ENCODE measurements at regions of chr6 and their contacts with region 1.

Region 1: DNA sequence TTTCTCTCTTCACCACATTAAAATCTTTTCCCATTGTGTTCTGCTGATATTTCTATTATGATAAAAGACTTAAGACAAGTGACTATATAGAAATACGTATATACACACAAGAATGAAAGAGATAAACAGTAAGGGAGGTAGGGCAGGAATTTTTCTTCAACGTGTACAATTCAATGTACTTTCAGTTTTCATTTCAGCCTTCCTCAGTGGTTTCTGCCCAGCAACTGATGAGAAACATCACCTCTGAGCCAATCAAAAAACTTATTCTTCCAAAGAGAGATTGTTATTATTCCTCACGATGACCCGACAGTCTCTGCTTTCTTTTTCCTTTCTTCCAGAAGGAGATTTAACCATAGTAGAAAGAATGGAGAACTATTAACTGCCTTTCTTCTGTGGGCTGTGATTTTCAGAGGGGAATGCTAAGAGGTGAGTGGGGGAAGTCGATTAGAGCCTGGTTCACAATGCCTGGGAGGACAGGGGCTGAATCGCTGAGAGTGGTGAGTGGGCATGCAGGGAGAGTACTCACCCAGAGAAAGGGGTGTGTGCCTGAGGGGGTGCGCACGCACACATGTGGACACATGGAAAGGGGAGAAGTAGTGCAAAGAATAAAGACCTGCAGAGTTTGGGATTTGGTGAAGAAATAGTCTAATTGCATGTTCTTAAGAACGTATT is at the start of gene BTN3A1:
- DNase-seq: peak; percentile 22 to 90 (median 65)
- ATAC-seq: peak; percentile 88
- H3K4me3 ChIP-seq: peak within 1 kb of the TSS; percentile 82 to 91
- H3K4me3 Mint-ChIP-seq: peak within 1 kb of the TSS; percentile 92
- H3K27ac ChIP-seq: peak within 1 kb of the TSS; percentile 92 to 97
- H3K27ac Mint-ChIP-seq: peak within 1 kb of the TSS; percentile 99
- H3K4me1 ChIP-seq: peaks cover 42% of the 10 kb centered on the region
- H3K4me1 Mint-ChIP-seq: peaks cover 50% of the 10 kb centered on the region
- H3K27me3 ChIP-seq: no peaks in the 10 kb centered on the region
- H3K27me3 Mint-ChIP-seq: no peaks in the 10 kb centered on the region
- CTCF ChIP-seq: no peak
- total RNA-seq, gene BTN3A1: 97.0 to 104 TPM

Region 2: GRCh38 chr6:24554485-24554884 is 1847.6 kb before region 1 on chr6:
- CTCF ChIA-PET with region 1: no interaction called
- POLR2A ChIA-PET with region 1: no interaction called
- intact Hi-C with region 1: no loop called
- DNase-seq: no peak
- ATAC-seq: no peak
- H3K4me3 ChIP-seq: no peak overlapping the region
- H3K4me3 Mint-ChIP-seq: no peak overlapping the region
- H3K27ac ChIP-seq: no peak overlapping the region
- H3K27ac Mint-ChIP-seq: no peak overlapping the region
- H3K4me1 ChIP-seq: no peaks in the 10 kb centered on the region
- H3K4me1 Mint-ChIP-seq: no peaks in the 10 kb centered on the region
- H3K27me3 ChIP-seq: no peaks in the 10 kb centered on the region
- H3K27me3 Mint-ChIP-seq: no peaks in the 10 kb centered on the region
- CTCF ChIP-seq: no peak

Region 3: GRCh38 chr6:25574312-25574711 is 827.8 kb before region 1 on chr6:
- CTCF ChIA-PET with region 1: no interaction called
- POLR2A ChIA-PET with region 1: no interaction called
- intact Hi-C with region 1: no loop called
- DNase-seq: no peak
- ATAC-seq: no peak
- H3K4me3 ChIP-seq: no peak overlapping the region
- H3K4me3 Mint-ChIP-seq: no peak overlapping the region
- H3K27ac ChIP-seq: no peak overlapping the region
- H3K27ac Mint-ChIP-seq: no peak overlapping the region
- H3K4me1 ChIP-seq: no peaks in the 10 kb centered on the region
- H3K4me1 Mint-ChIP-seq: no peaks in the 10 kb centered on the region
- H3K27me3 ChIP-seq: peaks cover 0 to 2% of the 10 kb centered on the region in 2 experiments
- H3K27me3 Mint-ChIP-seq: no peaks in the 10 kb centered on the region
- CTCF ChIP-seq: no peak

Region 4: DNA sequence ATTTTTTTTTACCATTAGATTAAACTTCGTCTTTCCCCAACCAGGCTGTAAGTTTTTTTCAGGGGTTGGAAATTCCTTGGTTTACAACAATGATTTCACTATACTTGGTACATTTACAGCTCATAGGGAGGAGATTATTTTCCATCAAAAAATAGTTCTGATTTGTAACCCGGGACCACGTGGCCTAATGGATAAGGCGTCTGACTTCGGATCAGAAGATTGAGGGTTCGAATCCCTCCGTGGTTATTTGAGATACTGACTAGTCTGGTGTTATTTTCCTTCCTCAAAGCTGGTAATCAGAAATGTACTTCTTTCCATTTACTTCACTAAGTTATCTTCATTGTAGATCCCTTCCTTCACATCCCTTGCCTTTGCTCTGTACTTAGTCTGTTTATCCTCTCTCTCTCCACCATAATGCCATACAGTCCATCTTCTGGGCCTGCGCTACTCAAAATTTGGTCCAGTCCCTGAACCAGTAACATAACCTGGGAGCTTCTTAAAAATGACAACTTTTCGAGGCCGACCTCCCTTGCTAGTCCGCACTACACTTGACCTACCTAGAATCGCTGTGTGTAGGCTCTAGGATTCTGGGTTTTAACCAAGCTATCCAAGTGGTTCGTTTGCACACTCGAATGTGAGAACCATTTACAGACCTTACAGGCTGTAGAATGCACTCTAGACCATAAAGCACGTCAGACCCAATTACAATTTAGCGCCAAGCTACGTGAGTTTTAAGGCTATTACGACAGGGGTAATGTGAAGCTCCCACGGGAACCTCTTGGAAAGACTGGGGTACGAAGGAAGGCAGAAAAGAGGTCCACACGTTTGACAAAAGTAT is 79.3 kb before region 1 on chr6:
- CTCF ChIA-PET with region 1: no interaction called
- POLR2A ChIA-PET with region 1: no interaction called
- intact Hi-C with region 1: no loop called
- DNase-seq: peak in 8 of 9 experiments; percentile 32 to 86 (median 58)
- ATAC-seq: peak; percentile 65
- H3K4me3 ChIP-seq: peak overlapping the region; percentile 55 to 64
- H3K4me3 Mint-ChIP-seq: peak overlapping the region; percentile 88
- H3K27ac ChIP-seq: no peak overlapping the region
- H3K27ac Mint-ChIP-seq: peak overlapping the region; percentile 90
- H3K4me1 ChIP-seq: peaks cover 5% of the 10 kb centered on the region
- H3K4me1 Mint-ChIP-seq: peaks cover 24% of the 10 kb centered on the region
- H3K27me3 ChIP-seq: peaks cover 0 to 2% of the 10 kb centered on the region in 2 experiments
- H3K27me3 Mint-ChIP-seq: peaks cover 15% of the 10 kb centered on the region
- CTCF ChIP-seq: no peak

Region 5: GRCh38 chr6:26363882-26364701 is 38.0 kb before region 1 on chr6:
- CTCF ChIA-PET with region 1: no interaction called
- POLR2A ChIA-PET with region 1: no interaction called
- intact Hi-C with region 1: loop called (anchors 2 kb)
- DNase-seq: peak in 6 of 9 experiments; percentile 9 to 69 (median 34)
- ATAC-seq: no peak
- H3K4me3 ChIP-seq: peak overlapping the region; percentile 90 to 92
- H3K4me3 Mint-ChIP-seq: no peak overlapping the region
- H3K27ac ChIP-seq: peak overlapping the region; percentile 95
- H3K27ac Mint-ChIP-seq: no peak overlapping the region
- H3K4me1 ChIP-seq: peaks cover 51% of the 10 kb centered on the region
- H3K4me1 Mint-ChIP-seq: peaks cover 53% of the 10 kb centered on the region
- H3K27me3 ChIP-seq: no peaks in the 10 kb centered on the region
- H3K27me3 Mint-ChIP-seq: no peaks in the 10 kb centered on the region
- CTCF ChIP-seq: no peak

Region 6: GRCh38 chr6:26383624-26384417 is 18.3 kb before region 1 on chr6:
- CTCF ChIA-PET with region 1: no interaction called
- POLR2A ChIA-PET with region 1: interaction called, 3 read pairs
- intact Hi-C with region 1: loop called (anchors 1 kb)
- DNase-seq: peak in 5 of 9 experiments; percentile 14 to 57 (median 21)
- ATAC-seq: peak; percentile 25
- H3K4me3 ChIP-seq: peak overlapping the region; percentile 94
- H3K4me3 Mint-ChIP-seq: peak overlapping the region; percentile 98
- H3K27ac ChIP-seq: peak overlapping the region; percentile 73 to 91
- H3K27ac Mint-ChIP-seq: peak overlapping the region; percentile 95
- H3K4me1 ChIP-seq: peaks cover 12% of the 10 kb centered on the region
- H3K4me1 Mint-ChIP-seq: peaks cover 44% of the 10 kb centered on the region
- H3K27me3 ChIP-seq: no peaks in the 10 kb centered on the region
- H3K27me3 Mint-ChIP-seq: no peaks in the 10 kb centered on the region
- CTCF ChIP-seq: no peak

Region 7: GRCh38 chr6:26457806-26458688 is 55.9 kb after region 1 on chr6 and contains the start of gene BTN2A1:
- CTCF ChIA-PET with region 1: no interaction called
- POLR2A ChIA-PET with region 1: no interaction called
- intact Hi-C with region 1: loop called in 1 of 2 experiments (anchors 5 kb)
- DNase-seq: peak; percentile 33 to 93 (median 65)
- ATAC-seq: peak; percentile 96
- H3K4me3 ChIP-seq: peak within 1 kb of the TSS; percentile 64 to 78
- H3K4me3 Mint-ChIP-seq: peak within 1 kb of the TSS; percentile 100
- H3K27ac ChIP-seq: peak within 1 kb of the TSS; percentile 61 to 92
- H3K27ac Mint-ChIP-seq: peak within 1 kb of the TSS; percentile 99
- H3K4me1 ChIP-seq: peaks cover 48% of the 10 kb centered on the region
- H3K4me1 Mint-ChIP-seq: peaks cover 68% of the 10 kb centered on the region
- H3K27me3 ChIP-seq: no peaks in the 10 kb centered on the region
- H3K27me3 Mint-ChIP-seq: no peaks in the 10 kb centered on the region
- CTCF ChIP-seq: no peak
- total RNA-seq, gene BTN2A1: 16.4 to 17.3 TPM